Activated CD4-positive, alpha-beta T cell treated with anti-CD3 and anti-CD28 coated beads for 36 hours (primary cell): ENCODE measurements at regions of chr11 and their contacts with region 1.

Region 1: DNA sequence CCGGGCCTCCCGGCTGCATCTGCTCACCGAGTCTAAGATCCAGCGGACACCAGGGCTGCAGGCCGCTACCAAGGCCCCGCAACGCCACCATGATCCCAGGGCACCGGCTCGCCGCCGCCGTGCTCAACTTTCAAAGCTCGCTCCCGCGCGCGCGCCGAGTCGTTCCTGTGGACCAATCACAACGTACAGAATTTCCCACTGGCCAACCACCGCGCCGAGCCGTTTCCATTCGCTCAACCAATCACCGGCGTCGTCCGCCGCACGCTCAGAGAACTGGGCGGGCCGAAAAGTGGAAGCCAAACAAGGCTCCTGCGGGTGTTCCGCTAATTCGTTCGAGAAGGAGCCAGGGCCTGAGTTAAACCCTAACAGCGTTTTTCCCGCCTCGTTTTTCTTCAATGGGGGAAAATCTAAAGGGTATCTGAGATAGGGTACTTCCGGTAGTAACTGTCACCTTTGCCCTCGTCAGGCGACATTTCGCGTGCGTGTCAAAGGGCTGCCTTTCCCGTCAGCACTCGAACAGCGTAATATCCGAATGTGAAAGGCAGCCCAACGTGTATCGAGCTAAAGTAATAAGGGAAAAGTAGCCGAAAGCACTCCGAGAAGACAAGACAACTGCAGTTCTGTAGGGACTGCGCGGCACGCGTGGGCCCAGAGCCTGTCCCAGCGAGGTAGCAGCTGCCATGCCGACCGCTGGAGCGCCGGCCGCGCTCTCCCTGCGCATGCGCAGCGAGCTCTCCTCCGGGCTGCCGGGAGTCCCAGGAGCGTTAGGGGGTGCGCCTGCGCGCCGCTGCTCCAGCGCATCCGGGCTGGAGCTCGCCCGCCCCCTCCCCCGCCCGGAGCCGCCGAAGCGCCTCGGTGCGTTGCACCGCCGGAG is at the starts of genes NCAPD3 and VPS26B:
- DNase-seq: peak; percentile 98
- ATAC-seq: peak; percentile 81
- H3K4me3 Mint-ChIP-seq: peak within 1 kb of the TSS; percentile 99
- H3K27ac Mint-ChIP-seq: peak within 1 kb of the TSS; percentile 98
- H3K4me1 Mint-ChIP-seq: peaks cover 59% of the 10 kb centered on the region
- H3K27me3 Mint-ChIP-seq: no peaks in the 10 kb centered on the region
- total RNA-seq, gene NCAPD3: 78.9 to 92.1 TPM
- total RNA-seq, gene VPS26B: 32.4 to 32.5 TPM

Region 2: GRCh38 chr11:133947321-133947756 is 276.7 kb before region 1 on chr11:
- CTCF ChIA-PET with region 1: no interaction called
- POLR2A ChIA-PET with region 1: interaction called, 3 read pairs
- intact Hi-C with region 1: loop called (anchors 1 kb)
- DNase-seq: peak; percentile 87
- ATAC-seq: peak; percentile 27
- H3K4me3 Mint-ChIP-seq: peak overlapping the region; percentile 65
- H3K27ac Mint-ChIP-seq: peak overlapping the region; percentile 85
- H3K4me1 Mint-ChIP-seq: peaks cover 75% of the 10 kb centered on the region
- H3K27me3 Mint-ChIP-seq: no peaks in the 10 kb centered on the region

Region 3: GRCh38 chr11:133956650-133957633 is 267.1 kb before region 1 on chr11 and contains the start of gene IGSF9B:
- CTCF ChIA-PET with region 1: no interaction called
- POLR2A ChIA-PET with region 1: no interaction called
- intact Hi-C with region 1: loop called in 1 of 2 experiments (anchors 2 kb)
- DNase-seq: peak; percentile 95
- ATAC-seq: peak; percentile 91
- H3K4me3 Mint-ChIP-seq: peak within 1 kb of the TSS; percentile 90
- H3K27ac Mint-ChIP-seq: peak within 1 kb of the TSS; percentile 87
- H3K4me1 Mint-ChIP-seq: peaks cover 49% of the 10 kb centered on the region
- H3K27me3 Mint-ChIP-seq: peaks cover 9% of the 10 kb centered on the region
- total RNA-seq, gene IGSF9B: 79.0 to 84.2 TPM

Region 4: GRCh38 chr11:134014511-134014910 is 209.6 kb before region 1 on chr11:
- CTCF ChIA-PET with region 1: no interaction called
- POLR2A ChIA-PET with region 1: no interaction called
- intact Hi-C with region 1: no loop called
- DNase-seq: no peak
- ATAC-seq: no peak
- H3K4me3 Mint-ChIP-seq: no peak overlapping the region
- H3K27ac Mint-ChIP-seq: no peak overlapping the region
- H3K4me1 Mint-ChIP-seq: no peaks in the 10 kb centered on the region
- H3K27me3 Mint-ChIP-seq: peaks cover 31% of the 10 kb centered on the region

Region 5: GRCh38 chr11:134068829-134069425 is 155.1 kb before region 1 on chr11 and contains the start of gene JAM3:
- CTCF ChIA-PET with region 1: interaction called, 4 read pairs
- POLR2A ChIA-PET with region 1: no interaction called
- intact Hi-C with region 1: loop called in 1 of 2 experiments (anchors 1 kb)
- DNase-seq: peak; percentile 98
- ATAC-seq: peak; percentile 96
- H3K4me3 Mint-ChIP-seq: peak within 1 kb of the TSS; percentile 93
- H3K27ac Mint-ChIP-seq: peak within 1 kb of the TSS; percentile 83
- H3K4me1 Mint-ChIP-seq: peaks cover 22% of the 10 kb centered on the region
- H3K27me3 Mint-ChIP-seq: peaks cover 9% of the 10 kb centered on the region
- total RNA-seq, gene JAM3: 15.3 to 17.5 TPM

Region 6: DNA sequence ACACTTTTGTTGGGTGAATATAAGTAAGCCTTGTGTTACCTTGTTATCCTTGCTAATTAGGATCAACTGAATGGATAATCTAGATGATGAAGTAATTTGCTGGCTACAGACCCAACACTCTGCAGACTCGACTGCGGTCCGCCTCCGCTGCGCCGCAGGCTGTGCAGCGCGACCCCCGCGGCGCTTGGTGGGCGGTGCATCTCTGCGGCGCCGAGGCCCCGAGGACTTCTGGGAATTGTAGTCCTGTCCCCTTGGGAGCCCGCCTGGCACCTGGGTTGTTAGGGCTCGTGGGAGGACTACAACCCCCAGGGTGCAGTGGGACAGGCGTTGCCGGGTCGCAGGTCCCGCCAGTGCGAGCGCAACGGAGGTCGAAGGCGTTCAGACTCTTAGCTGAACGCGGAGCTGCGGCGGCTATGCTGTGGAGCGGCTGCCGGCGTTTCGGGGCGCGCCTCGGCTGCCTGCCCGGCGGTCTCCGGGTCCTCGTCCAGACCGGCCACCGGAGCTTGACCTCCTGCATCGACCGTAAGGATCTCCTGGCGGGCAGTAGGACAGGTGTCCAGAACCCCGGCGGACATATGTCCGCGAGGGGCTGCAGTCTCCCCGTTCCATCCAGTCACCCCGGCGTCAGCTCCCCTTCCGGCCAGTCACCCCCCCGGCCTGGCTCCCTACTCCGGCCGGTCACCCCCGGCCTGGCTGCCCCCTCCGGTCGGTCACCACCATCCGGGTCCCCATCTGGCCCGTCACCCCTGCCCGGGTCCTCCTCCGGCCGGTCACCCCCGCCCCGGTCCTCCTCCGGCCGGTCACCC is 29.3 kb after region 1 on chr11 and contains the starts of genes ACAD8 and THYN1:
- CTCF ChIA-PET with region 1: interaction called, 5 read pairs
- POLR2A ChIA-PET with region 1: interaction called, 14 read pairs
- intact Hi-C with region 1: loop called (anchors 1 kb)
- DNase-seq: peak; percentile 98
- ATAC-seq: peak; percentile 99
- H3K4me3 Mint-ChIP-seq: peak within 1 kb of the TSS; percentile 90
- H3K27ac Mint-ChIP-seq: peak within 1 kb of the TSS; percentile 80
- H3K4me1 Mint-ChIP-seq: peaks cover 36% of the 10 kb centered on the region
- H3K27me3 Mint-ChIP-seq: no peaks in the 10 kb centered on the region
- total RNA-seq, gene ACAD8: 12.4 to 16.6 TPM
- total RNA-seq, gene THYN1: 75.5 to 89.5 TPM

Region 7: DNA sequence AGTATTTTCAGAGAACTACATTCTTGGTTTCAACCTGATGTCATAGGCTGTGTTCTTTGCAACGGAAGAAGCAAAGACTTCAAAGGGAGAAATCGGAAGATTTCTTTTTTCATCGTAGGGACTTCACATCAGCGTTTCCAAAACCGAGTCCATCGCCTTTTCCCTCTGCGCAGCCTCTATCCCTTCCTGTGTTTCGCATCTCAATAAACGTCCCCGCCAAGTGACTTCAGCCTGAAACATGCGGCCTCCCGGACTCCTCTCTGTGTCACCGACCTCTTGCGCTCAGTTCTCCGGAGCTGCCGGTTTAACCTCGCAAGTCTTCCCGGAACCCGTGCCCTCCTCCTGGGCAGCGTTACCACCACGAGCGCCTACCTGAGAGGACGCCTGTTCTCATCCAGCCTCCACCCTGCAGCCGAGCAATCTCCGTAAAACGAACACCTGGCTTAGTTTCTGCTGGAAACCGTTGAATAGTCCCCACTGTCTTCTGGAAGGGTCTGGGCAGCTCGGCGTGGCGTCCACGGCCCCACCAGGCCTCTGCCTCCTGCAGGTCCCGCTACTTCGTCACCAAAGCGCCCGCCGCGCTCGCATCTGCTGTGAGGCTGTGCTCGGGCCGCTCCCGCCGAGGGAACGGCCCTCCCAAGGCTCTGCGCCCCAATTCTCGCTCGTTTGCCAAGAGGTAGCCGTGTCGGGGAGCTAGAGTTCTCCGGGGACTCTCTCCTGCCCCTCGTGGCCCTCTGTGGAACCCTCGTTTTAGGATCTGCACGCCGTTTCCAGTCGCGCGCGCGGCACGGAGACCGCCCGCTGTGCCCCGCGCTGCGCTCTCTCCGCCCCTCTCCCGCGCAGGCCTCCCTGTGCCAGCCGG is 51.7 kb after region 1 on chr11 and contains the start of gene GLB1L3:
- CTCF ChIA-PET with region 1: interaction called, 6 read pairs
- POLR2A ChIA-PET with region 1: interaction called, 7 read pairs
- intact Hi-C with region 1: loop called in 1 of 2 experiments (anchors 1 kb)
- DNase-seq: peak; percentile 89
- ATAC-seq: peak; percentile 80
- H3K4me3 Mint-ChIP-seq: peak within 1 kb of the TSS; percentile 96
- H3K27ac Mint-ChIP-seq: peak within 1 kb of the TSS; percentile 96
- H3K4me1 Mint-ChIP-seq: peaks cover 40% of the 10 kb centered on the region
- H3K27me3 Mint-ChIP-seq: peaks cover 3% of the 10 kb centered on the region
- total RNA-seq, gene GLB1L3: 11.7 to 12.2 TPM

Region 8: GRCh38 chr11:134331354-134332188 is 107.5 kb after region 1 on chr11 and contains the start of gene GLB1L2:
- CTCF ChIA-PET with region 1: no interaction called
- POLR2A ChIA-PET with region 1: no interaction called
- intact Hi-C with region 1: loop called (anchors 1 kb)
- DNase-seq: peak; percentile 86
- ATAC-seq: peak; percentile 99
- H3K4me3 Mint-ChIP-seq: peak within 1 kb of the TSS; percentile 75
- H3K27ac Mint-ChIP-seq: peak within 1 kb of the TSS; percentile 64
- H3K4me1 Mint-ChIP-seq: peaks cover 12% of the 10 kb centered on the region
- H3K27me3 Mint-ChIP-seq: peaks cover 23% of the 10 kb centered on the region
- total RNA-seq, gene GLB1L2: 3.9 to 4.2 TPM